ENCODE measurements at regions of chr11 and their contacts with region 1.

Region 1: GRCh38 chr11:41921746-41922390 is 462.4 kb upstream of the LRRC4C start:
- DNase-seq: no peak
- H3K4me3 ChIP-seq: no peak overlapping the region
- H3K27ac ChIP-seq: no peak overlapping the region
- H3K4me1 ChIP-seq: no peaks in the 10 kb centered on the region
- H3K27me3 ChIP-seq: no peaks in the 10 kb centered on the region
- CTCF ChIP-seq: no peak
- POLR2A ChIP-seq: no peak

Region 2: DNA sequence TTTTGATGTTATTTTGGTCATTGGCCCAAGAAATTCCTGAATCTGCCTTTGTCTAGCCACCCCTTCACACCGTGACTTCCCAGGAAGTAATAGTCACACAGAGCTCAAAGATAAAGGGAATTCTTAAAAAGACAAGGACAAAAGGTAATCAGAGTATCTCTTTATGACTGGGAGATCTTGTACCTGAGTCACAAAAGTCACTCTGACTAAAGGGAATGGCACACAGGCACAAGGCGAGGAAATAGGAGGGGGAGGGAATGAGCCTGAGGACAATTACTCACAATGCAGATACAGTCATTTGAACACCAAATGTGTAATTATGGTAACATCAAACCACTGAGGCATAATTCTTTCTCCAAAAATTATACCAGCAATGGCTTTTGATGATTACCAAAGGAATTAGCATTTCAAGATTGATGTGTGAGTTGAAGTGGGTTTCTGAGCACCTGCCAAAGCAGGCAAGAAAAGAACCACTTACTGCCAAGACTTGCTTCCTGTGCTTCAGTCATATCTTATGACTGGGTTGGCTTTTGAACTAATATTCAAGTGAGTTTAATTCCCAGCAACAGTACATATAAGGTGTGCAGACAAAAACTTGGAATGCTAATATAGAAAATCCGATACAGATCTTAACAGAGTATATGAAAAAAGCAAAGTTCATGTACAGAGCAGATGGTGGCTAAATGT is 1318.9 kb before region 1 on chr11:
- intact Hi-C with region 1: loop called (anchors 10 kb)
- DNase-seq: no peak
- H3K4me3 ChIP-seq: no peak overlapping the region
- H3K27ac ChIP-seq: no peak overlapping the region
- H3K4me1 ChIP-seq: no peaks in the 10 kb centered on the region
- H3K27me3 ChIP-seq: no peaks in the 10 kb centered on the region
- CTCF ChIP-seq: no peak
- POLR2A ChIP-seq: no peak

Region 3: GRCh38 chr11:42066113-42066512 is 144.2 kb after region 1 on chr11:
- intact Hi-C with region 1: no loop called
- DNase-seq: no peak
- H3K4me3 ChIP-seq: no peak overlapping the region
- H3K27ac ChIP-seq: no peak overlapping the region
- H3K4me1 ChIP-seq: no peaks in the 10 kb centered on the region
- H3K27me3 ChIP-seq: no peaks in the 10 kb centered on the region
- CTCF ChIP-seq: no peak
- POLR2A ChIP-seq: no peak